Activated CD4-positive, alpha-beta T cell treated with anti-CD3 and anti-CD28 coated beads for 36 hours (primary cell): ENCODE measurements at regions of chr7 and their contacts with region 1.

Region 1: DNA sequence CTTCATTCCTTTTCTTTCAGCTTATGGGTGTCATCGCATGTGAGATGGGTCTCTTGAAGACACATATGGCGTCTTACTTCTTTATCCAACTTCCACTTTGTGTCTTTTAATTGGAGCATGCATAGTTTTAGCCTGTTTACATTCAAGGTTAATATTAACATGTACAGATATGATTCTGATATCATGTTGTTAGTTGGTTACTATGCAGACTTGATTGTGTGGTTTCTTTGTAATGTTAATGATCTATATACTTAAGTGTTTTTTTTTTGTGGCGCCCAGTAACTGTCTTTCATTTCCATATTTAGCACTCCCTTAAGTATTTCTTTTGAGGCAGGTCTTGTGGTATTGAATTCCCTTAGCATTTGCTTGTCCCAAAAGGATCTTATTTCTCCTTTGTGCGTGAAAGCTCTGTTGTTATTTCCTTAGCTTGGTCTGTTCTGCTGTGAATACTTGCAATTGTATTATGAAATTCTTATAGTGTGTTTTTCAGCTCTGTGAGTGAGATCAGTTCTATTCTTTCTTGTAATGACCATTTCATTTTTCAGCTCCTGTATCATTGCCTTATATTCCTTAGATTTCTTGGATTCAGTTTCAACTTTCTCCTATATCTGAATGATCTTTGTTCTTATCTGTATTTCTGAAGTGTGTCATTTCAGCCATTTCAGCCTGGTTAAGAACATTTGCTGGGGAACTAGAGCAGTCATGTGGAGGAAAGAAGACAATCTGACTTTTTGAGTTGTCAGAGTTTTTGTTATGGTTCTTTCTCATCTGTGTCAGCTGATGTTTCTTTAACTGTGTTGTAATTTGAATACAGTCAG is 88.4 kb downstream of the ABCA13 start:
- DNase-seq: no peak
- ATAC-seq: no peak
- H3K4me3 Mint-ChIP-seq: no peak overlapping the region
- H3K27ac Mint-ChIP-seq: no peak overlapping the region
- H3K4me1 Mint-ChIP-seq: peaks cover 3% of the 10 kb centered on the region
- H3K27me3 Mint-ChIP-seq: peaks cover 14% of the 10 kb centered on the region

Region 2: DNA sequence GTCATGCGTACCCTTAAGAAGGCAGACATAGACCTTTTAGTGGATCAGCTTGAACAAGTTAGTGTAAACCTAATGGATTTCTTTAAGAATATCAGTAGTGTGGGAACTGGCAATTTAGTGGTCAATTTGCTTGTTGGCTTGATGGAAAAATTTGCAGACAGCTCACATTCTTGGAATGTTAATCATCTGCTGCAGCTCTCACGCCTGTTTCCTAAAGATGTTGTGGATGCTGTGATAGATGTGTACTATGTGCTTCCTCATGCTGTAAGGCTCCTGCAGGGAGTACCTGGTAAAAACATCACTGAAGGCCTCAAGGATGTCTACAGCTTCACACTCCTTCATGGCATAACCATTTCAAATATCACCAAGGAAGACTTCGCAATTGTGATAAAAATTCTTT is 15.0 kb after region 1 on chr7:
- CTCF ChIA-PET with region 1: no interaction called
- POLR2A ChIA-PET with region 1: interaction called, 14 read pairs
- intact Hi-C with region 1: no loop called
- DNase-seq: no peak
- ATAC-seq: no peak
- H3K4me3 Mint-ChIP-seq: no peak overlapping the region
- H3K27ac Mint-ChIP-seq: no peak overlapping the region
- H3K4me1 Mint-ChIP-seq: peaks cover 2% of the 10 kb centered on the region
- H3K27me3 Mint-ChIP-seq: peaks cover 4% of the 10 kb centered on the region